ENCODE measurements at regions of chr2 and their contacts with region 1.

Region 1: DNA sequence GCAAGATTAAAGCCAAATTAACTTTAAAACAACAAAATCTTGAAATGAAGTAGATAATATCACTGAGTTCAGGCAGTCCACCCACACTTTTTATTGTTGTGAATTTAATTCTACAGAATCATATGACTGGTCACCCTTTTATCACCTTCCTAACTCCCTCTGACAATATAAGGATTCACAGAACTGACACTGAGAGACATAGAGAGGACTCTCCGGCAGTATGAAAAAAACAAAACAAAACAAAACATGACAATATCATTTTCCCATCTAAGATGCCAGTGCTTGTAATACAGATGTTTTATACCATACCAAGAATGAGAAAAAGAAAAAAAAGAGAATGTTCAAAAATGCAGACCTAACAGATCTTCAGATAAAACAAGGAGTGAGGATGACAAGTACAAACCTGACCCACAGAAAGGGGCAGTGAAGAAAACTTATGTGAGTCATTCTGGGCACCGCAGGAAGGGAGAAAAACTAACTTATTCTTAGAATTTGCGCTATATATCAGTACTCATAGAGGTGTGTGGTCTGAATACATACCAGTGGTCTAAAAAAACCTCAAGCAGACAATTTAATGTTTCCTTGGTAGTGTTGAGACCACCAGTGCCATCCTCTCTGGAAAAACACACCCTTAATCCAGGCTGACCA is 136.6 kb downstream of the ZAP70 start:
- DNase-seq: peak; percentile 32
- H3K4me3 Mint-ChIP-seq: no peak overlapping the region
- H3K27ac Mint-ChIP-seq: peak overlapping the region; percentile 16
- H3K4me1 Mint-ChIP-seq: peaks cover 49% of the 10 kb centered on the region
- H3K27me3 Mint-ChIP-seq: no peaks in the 10 kb centered on the region

Region 2: GRCh38 chr2:97870396-97870843 is 20.4 kb after region 1 on chr2:
- CTCF ChIA-PET with region 1: interaction called, 6 read pairs
- POLR2A ChIA-PET with region 1: interaction called, 5 read pairs
- intact Hi-C with region 1: loop called (anchors 1 kb)
- DNase-seq: peak; percentile 74
- H3K4me3 Mint-ChIP-seq: no peak overlapping the region
- H3K27ac Mint-ChIP-seq: peak overlapping the region; percentile 5
- H3K4me1 Mint-ChIP-seq: peaks cover 41% of the 10 kb centered on the region
- H3K27me3 Mint-ChIP-seq: no peaks in the 10 kb centered on the region

Region 3: GRCh38 chr2:99514357-99514756 is 1664.4 kb after region 1 on chr2:
- CTCF ChIA-PET with region 1: no interaction called
- POLR2A ChIA-PET with region 1: no interaction called
- intact Hi-C with region 1: no loop called
- DNase-seq: no peak
- H3K4me3 Mint-ChIP-seq: no peak overlapping the region
- H3K27ac Mint-ChIP-seq: no peak overlapping the region
- H3K4me1 Mint-ChIP-seq: no peaks in the 10 kb centered on the region
- H3K27me3 Mint-ChIP-seq: peaks cover 5% of the 10 kb centered on the region